ENCODE measurements at regions of chr12 and their contacts with region 1.

Region 1: DNA sequence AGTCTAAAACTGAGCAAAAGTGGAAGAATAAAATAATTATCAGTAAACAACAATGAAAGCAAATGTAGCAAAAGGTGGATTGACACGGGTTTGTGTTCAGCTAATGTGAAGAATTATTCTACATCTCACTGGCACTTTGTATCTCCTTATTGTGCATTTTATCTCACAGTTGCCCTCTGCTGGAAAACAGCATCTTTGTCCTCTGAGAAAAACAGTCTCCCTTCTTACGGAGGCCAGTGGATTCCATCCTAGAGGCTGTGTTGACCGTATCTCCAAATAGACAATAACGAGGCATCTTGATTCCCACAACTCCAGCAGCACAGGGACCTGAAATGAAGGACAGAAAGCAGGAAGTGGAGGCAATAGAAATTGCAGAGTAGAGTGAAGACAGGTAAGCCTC is 51.3 kb upstream of the PLBD1 start:
- DNase-seq: no peak
- ATAC-seq: no peak
- H3K4me3 ChIP-seq: no peak overlapping the region
- H3K27ac ChIP-seq: no peak overlapping the region
- H3K4me1 ChIP-seq: peaks cover under 1% of the 10 kb centered on the region
- H3K27me3 ChIP-seq: no peaks in the 10 kb centered on the region

Region 2: DNA sequence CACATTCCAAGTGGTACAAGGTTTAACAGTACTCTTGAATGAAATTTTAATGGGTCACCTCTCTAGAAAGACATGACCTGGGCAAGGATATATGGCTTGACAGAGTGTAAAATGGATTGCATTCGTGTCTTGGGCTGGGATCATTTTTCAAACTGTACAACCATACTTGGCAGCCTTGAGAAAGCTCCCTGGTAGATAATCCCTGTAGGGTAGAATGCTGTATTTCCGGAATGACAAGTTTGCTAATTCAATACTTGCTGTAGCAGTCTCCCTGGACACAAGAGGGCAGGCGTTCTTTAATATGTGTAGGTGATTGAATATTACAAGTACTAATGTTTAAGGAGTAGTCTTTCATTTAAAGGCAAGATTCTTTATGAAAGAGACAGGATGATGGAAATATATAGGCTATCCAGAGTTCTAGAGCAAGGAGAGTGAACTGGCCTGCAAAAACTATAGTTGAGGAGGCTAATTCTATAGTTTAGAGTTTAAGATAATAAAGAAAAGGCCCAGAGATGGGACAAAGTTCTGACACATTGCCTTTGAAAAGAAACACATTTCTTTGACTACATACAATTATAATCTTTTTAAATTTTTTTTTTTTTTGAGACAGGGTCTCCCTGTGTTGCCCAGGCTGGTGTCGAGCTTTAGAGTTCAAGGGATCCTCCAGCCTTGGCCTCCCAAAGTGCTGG is 104.7 kb before region 1 on chr12:
- intact Hi-C with region 1: loop called in 1 of 4 experiments (anchors 10 kb)
- DNase-seq: no peak
- ATAC-seq: peak; percentile 43 to 47
- H3K4me3 ChIP-seq: no peak overlapping the region
- H3K27ac ChIP-seq: no peak overlapping the region
- H3K4me1 ChIP-seq: no peaks in the 10 kb centered on the region
- H3K27me3 ChIP-seq: no peaks in the 10 kb centered on the region

Measured in right cardiac atrium (tissue), 5 donors.